CD4-positive, alpha-beta memory T cell (primary cell): ENCODE measurements at regions of chr19 and their contacts with region 1.

Region 1: DNA sequence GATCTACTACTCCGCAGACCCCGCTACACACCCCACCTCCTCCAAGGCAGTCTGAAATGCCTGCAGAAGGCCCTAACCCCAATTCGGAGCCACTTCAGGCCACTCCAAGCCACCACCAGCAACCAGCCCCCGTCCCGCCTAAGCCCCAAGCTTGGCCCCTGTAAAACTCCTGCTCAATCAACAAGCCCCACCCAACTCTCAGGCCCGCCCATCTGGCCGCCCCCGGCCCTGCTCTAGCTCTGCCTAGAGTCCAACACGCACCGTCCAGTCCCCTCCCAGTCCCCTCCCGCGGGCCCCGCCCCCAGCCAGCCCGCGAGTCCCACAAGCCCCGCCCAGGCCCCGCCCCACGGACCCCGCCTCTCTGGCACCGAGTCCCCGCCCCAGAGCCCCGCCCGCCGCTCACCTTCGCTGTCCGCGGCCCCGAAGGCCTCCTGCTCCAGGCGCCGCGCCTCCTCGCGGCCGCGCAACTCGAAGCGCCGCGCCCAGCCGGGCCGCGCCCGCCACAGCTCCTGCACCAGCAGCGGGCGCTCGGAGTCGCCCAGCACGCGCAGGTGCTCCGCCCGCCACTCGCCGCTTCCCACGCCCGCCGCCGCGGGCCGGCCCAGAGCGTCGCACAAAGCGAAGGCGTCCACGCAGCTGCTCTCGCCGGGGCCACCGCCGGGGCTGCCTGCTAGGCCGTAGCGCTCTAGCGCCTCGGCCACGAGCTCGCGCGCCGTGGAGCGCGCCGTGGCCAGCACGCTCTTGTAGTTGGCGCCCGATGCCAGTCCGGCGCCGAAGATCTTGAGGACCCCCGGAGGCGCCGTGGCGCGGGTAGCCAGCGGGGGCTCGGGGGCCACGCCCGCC is 1.6 kb downstream of the RASIP1 start:
- DNase-seq: peak; percentile 85 to 91 (median 86)
- H3K4me3 ChIP-seq: peak overlapping the region in 1 of 2 donors; percentile 24
- H3K4me3 Mint-ChIP-seq: peak overlapping the region; percentile 31 to 72 (median 62)
- H3K27ac ChIP-seq: no peak overlapping the region
- H3K27ac Mint-ChIP-seq: peak overlapping the region in 6 of 7 donors; percentile 27 to 92 (median 72)
- H3K4me1 ChIP-seq: peaks cover 29% of the 10 kb centered on the region
- H3K4me1 Mint-ChIP-seq: peaks cover 3 to 28% (median 16%) of the 10 kb centered on the region in 4 donors
- H3K27me3 ChIP-seq: no peaks in the 10 kb centered on the region
- H3K27me3 Mint-ChIP-seq: no peaks in the 10 kb centered on the region

Region 2: GRCh38 chr19:48637170-48637947 is 101.4 kb before region 1 on chr19 and contains the start of gene DBP:
- CTCF ChIA-PET with region 1: no interaction called
- POLR2A ChIA-PET with region 1: interaction called, 13 read pairs
- intact Hi-C with region 1: loop called (anchors 2 kb)
- DNase-seq: peak in 4 of 5 donors; percentile 99 to 100 (median 100)
- H3K4me3 ChIP-seq: peak within 1 kb of the TSS; percentile 52 to 88
- H3K4me3 Mint-ChIP-seq: peak within 1 kb of the TSS; percentile 89 to 100 (median 99)
- H3K27ac ChIP-seq: peak within 1 kb of the TSS; percentile 88
- H3K27ac Mint-ChIP-seq: peak within 1 kb of the TSS; percentile 93 to 100 (median 99)
- H3K4me1 ChIP-seq: peaks cover 46% of the 10 kb centered on the region
- H3K4me1 Mint-ChIP-seq: peaks cover 20 to 55% (median 40%) of the 10 kb centered on the region in 4 donors
- H3K27me3 ChIP-seq: no peaks in the 10 kb centered on the region
- H3K27me3 Mint-ChIP-seq: no peaks in the 10 kb centered on the region
- total RNA-seq, gene DBP: 62.6 to 69.5 TPM

Region 3: DNA sequence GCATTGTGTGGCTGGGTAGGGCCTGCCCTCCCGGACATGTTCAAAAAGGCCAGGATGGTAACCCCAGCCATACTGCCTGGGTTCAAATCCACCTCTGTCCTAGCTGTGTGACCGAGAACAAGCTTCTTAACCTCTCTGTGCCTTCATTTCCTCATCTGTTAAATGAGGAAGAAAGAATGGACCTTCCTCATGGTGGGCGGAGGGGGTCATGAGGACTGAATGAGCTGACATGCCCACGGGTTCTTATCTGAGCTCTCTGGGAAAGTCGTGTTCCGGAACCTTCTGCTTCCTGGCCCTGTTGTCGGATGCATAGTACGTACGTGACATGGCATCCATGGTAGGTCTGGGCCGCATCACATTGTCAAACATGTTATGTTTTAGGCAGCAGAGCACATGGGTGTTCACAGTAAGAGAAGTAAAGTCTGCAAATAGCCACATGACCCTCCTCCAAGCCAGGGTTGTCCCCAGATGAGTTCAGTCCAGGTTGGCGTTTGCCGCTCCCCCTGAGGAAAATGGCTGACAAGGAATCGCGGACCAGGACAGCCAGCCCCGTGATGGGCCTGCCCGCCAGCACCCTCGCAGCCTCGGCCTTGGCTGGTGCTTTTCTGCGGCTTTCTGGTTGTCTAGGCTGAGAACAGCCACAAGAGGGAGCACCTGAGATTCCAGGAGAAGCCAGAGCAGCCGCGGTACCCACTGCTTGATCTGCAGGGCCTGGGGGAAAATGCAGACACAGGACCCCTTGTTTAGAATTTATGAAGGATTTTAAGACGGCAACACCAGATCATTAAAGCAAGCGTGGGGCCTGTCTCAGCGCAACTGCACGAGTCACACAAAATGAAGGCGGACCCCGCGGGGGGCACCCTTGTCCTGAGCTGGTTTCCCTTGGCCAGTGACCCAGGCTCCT is 63.6 kb before region 1 on chr19:
- CTCF ChIA-PET with region 1: interaction called, 12 read pairs
- POLR2A ChIA-PET with region 1: interaction called, 3 read pairs
- intact Hi-C with region 1: loop called (anchors 2 kb)
- DNase-seq: peak; percentile 72 to 80 (median 75)
- H3K4me3 ChIP-seq: no peak overlapping the region
- H3K4me3 Mint-ChIP-seq: peak overlapping the region in 1 of 8 donors; percentile 2
- H3K27ac ChIP-seq: no peak overlapping the region
- H3K27ac Mint-ChIP-seq: peak overlapping the region in 3 of 7 donors; percentile 23 to 86 (median 64)
- H3K4me1 ChIP-seq: peaks cover 9% of the 10 kb centered on the region
- H3K4me1 Mint-ChIP-seq: peaks cover 5 to 8% (median 6%) of the 10 kb centered on the region in 4 donors
- H3K27me3 ChIP-seq: no peaks in the 10 kb centered on the region
- H3K27me3 Mint-ChIP-seq: no peaks in the 10 kb centered on the region

Region 4: GRCh38 chr19:48713864-48714758 is 24.7 kb before region 1 on chr19:
- CTCF ChIA-PET with region 1: interaction called, 4 read pairs
- POLR2A ChIA-PET with region 1: interaction called, 11 read pairs
- intact Hi-C with region 1: loop called (anchors 1 kb)
- DNase-seq: peak; percentile 96 to 99 (median 97)
- H3K4me3 ChIP-seq: peak overlapping the region; percentile 63 to 73
- H3K4me3 Mint-ChIP-seq: peak overlapping the region; percentile 83 to 94 (median 90)
- H3K27ac ChIP-seq: peak overlapping the region; percentile 70
- H3K27ac Mint-ChIP-seq: peak overlapping the region; percentile 57 to 95 (median 92)
- H3K4me1 ChIP-seq: peaks cover 24% of the 10 kb centered on the region
- H3K4me1 Mint-ChIP-seq: peaks cover 4 to 34% (median 15%) of the 10 kb centered on the region in 4 donors
- H3K27me3 ChIP-seq: no peaks in the 10 kb centered on the region
- H3K27me3 Mint-ChIP-seq: no peaks in the 10 kb centered on the region

Region 5: GRCh38 chr19:48720613-48721296 is 18.0 kb before region 1 on chr19:
- CTCF ChIA-PET with region 1: interaction called, 12 read pairs
- POLR2A ChIA-PET with region 1: interaction called, 37 read pairs
- intact Hi-C with region 1: no loop called
- DNase-seq: peak; percentile 91 to 97 (median 92)
- H3K4me3 ChIP-seq: peak overlapping the region; percentile 50 to 75
- H3K4me3 Mint-ChIP-seq: peak overlapping the region; percentile 94 to 99 (median 98)
- H3K27ac ChIP-seq: peak overlapping the region; percentile 72
- H3K27ac Mint-ChIP-seq: peak overlapping the region; percentile 94 to 100 (median 99)
- H3K4me1 ChIP-seq: peaks cover 19% of the 10 kb centered on the region
- H3K4me1 Mint-ChIP-seq: peaks cover 15 to 34% (median 25%) of the 10 kb centered on the region in 4 donors
- H3K27me3 ChIP-seq: no peaks in the 10 kb centered on the region
- H3K27me3 Mint-ChIP-seq: no peaks in the 10 kb centered on the region

Region 6: DNA sequence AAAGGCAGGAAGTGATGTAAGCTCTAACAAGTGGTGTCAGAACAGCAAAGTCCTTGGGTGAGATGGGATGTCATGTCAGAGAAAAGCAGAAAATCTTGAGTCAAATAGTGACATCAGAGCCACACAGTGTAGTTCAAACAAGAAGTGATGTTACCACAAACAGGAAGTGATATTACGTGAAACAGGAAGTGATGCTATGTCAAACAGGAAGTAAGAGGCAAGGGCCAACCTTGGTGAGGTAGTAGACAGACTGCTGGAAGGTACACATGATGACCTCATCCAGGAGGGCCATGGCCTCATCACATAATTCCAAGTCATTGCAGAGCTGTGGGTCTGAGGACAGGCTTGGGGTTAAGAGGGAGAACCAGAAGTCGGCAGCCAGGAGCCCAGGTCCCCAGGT is 12.2 kb before region 1 on chr19:
- CTCF ChIA-PET with region 1: interaction called, 12 read pairs
- POLR2A ChIA-PET with region 1: interaction called, 37 read pairs
- intact Hi-C with region 1: no loop called
- DNase-seq: peak; percentile 39 to 73 (median 68)
- H3K4me3 ChIP-seq: peak overlapping the region in 1 of 2 donors; percentile 10
- H3K4me3 Mint-ChIP-seq: peak overlapping the region; percentile 4 to 45 (median 31)
- H3K27ac ChIP-seq: no peak overlapping the region
- H3K27ac Mint-ChIP-seq: peak overlapping the region; percentile 69 to 96 (median 94)
- H3K4me1 ChIP-seq: peaks cover 27% of the 10 kb centered on the region
- H3K4me1 Mint-ChIP-seq: peaks cover 15 to 33% (median 21%) of the 10 kb centered on the region in 4 donors
- H3K27me3 ChIP-seq: no peaks in the 10 kb centered on the region
- H3K27me3 Mint-ChIP-seq: no peaks in the 10 kb centered on the region